ENCODE measurements at regions of chr5 and their contacts with region 1.

Region 1: GRCh38 chr5:174311531-174312269 is 266.2 kb downstream of the NSG2 start:
- DNase-seq: peak in 1 of 2 experiments; percentile 58
- H3K4me3 ChIP-seq: no peak overlapping the region
- H3K27ac ChIP-seq: no peak overlapping the region
- H3K4me1 ChIP-seq: no peaks in the 10 kb centered on the region
- H3K27me3 ChIP-seq: peaks cover 99% of the 10 kb centered on the region
- CTCF ChIP-seq: peak; percentile 71

Region 2: DNA sequence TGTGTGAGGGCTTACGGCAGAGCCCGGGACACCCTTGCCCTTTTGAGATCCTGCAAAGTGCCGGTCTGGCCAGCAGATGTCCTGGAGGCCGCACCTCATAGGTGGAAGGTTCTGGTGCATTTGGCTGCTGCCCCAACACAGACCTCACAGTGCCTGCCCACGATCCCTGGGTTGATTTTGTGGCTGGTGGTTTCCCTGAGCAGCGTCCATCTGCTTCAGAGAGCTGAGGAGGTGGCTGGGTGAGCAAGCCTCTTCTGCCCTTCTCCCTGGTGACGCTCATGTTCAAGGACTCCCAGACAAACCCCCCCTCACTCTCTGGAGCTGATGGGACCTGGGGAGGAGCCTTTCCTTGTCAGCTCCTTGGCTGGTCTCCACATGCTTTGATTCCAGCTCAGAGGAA is 1148.5 kb before region 1 on chr5:
- CTCF ChIA-PET with region 1: no interaction called
- POLR2A ChIA-PET with region 1: no interaction called
- intact Hi-C with region 1: loop called (anchors 10 kb)
- DNase-seq: no peak
- H3K4me3 ChIP-seq: no peak overlapping the region
- H3K27ac ChIP-seq: no peak overlapping the region
- H3K4me1 ChIP-seq: no peaks in the 10 kb centered on the region
- H3K27me3 ChIP-seq: no peaks in the 10 kb centered on the region
- CTCF ChIP-seq: no peak

Region 3: DNA sequence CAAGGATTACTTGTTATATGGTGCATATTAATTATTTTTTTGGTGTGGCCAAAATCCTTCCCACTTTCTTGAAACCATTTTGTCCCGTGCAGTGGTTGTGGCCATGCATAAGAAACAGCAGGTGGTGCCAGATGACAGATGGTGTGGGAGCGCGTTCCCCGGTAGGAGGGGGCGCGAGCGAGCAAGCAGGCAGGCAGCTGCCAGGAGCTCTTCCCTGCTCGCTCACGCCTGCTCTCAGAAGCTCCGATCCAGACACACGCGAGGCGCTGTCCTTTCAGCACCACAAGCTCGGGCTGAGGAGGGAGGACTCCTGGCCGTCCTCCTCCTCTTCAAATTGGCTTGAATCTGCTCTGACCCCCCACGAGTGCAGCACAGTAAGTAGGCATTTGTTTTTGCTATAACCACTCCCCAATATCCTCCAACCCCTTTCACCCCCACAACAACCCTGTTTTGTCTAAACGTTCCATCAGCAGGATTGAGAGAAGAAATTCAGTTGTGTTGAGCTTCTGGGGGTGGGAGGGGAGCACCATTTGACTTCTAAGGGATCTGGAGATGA is 266.2 kb before region 1 on chr5 and contains the start of gene NSG2:
- CTCF ChIA-PET with region 1: no interaction called
- POLR2A ChIA-PET with region 1: no interaction called
- intact Hi-C with region 1: loop called (anchors 1 kb)
- DNase-seq: peak; percentile 60 to 73
- H3K4me3 ChIP-seq: no peak within 1 kb of the TSS
- H3K27ac ChIP-seq: no peak within 1 kb of the TSS
- H3K4me1 ChIP-seq: no peaks in the 10 kb centered on the region
- H3K27me3 ChIP-seq: peaks cover 17% of the 10 kb centered on the region
- CTCF ChIP-seq: peak; percentile 61
- total RNA-seq, gene NSG2: not detected in 2 replicates

Region 4: DNA sequence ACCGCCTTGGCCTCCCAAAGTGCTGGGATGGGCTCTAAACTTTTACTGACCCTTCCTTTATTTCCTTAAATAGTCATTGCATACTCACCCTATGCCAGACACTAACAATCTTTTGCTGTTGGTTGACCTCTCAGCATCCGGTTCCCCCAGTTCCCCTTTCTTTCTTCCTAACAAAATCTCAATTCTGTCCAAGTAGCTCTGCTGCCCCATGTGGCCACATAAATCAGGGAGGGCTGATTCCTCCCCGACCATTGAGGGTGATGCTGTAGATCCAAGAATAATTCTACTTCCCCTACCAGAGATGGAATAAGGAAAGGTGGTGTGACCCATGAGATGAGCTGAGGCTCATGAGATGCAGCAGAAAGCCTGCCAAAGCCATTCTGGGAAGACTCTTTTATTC is 97.4 kb after region 1 on chr5:
- CTCF ChIA-PET with region 1: no interaction called
- POLR2A ChIA-PET with region 1: no interaction called
- intact Hi-C with region 1: no loop called
- DNase-seq: no peak
- H3K4me3 ChIP-seq: no peak overlapping the region
- H3K27ac ChIP-seq: no peak overlapping the region
- H3K4me1 ChIP-seq: 0 out of 2 replicates have a peak, but pooled peaks cover 10% of the 10 kb centered on the region
- H3K27me3 ChIP-seq: peaks cover 13% of the 10 kb centered on the region; the same call in 1 of the 2 replicates
- CTCF ChIP-seq: no peak

Region 5: DNA sequence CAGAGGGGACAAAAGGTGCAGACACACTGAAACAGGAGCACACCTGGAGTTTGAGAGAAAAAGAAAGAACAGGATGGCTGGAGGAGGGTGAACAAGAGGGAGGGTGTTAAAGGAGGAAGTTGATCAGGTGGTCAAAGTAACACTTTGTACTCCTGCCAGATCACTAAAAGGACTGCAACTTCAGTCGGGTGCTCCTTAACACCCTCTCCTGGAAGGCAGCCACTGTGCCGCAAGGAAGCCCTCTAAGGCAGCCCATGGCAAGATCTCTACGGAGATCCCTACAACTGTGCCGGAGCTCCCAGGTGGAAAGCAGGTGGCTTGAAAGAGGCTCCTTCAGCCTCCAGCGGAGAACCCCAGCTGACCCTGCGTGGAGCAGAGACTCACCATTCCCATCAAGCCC is 288.3 kb after region 1 on chr5:
- CTCF ChIA-PET with region 1: no interaction called
- POLR2A ChIA-PET with region 1: no interaction called
- intact Hi-C with region 1: no loop called
- DNase-seq: no peak
- H3K4me3 ChIP-seq: no peak overlapping the region
- H3K27ac ChIP-seq: no peak overlapping the region
- H3K4me1 ChIP-seq: no peaks in the 10 kb centered on the region
- H3K27me3 ChIP-seq: peaks cover 68% of the 10 kb centered on the region
- CTCF ChIP-seq: no peak

Measured in PC-9 (cell line).